ENCODE measurements at regions of chr3 and their contacts with region 1.

Region 1: DNA sequence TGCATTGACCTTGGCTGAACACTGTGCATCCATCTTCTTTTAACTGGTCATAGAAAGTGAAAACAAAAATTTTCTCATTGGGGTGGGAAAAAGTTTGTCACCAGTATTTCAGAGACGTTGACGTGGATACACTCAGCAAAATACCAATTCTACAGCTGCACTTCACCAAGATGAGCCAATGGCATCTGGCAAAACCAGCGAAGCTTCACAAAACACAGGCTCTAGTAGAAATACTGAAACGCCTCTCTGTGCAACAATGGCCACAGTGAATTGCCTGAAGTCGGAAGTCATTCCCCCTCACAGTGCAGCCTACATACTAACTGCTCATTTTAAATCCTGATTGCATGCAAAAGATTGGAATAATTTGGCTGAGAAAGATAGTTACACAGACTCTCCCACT is 17.0 kb downstream of the PCYT1A start:
- DNase-seq: no peak
- ATAC-seq: peak; percentile 20; the same call in 1 of the 2 replicates
- H3K4me3 ChIP-seq: no peak overlapping the region
- H3K27ac ChIP-seq: peak overlapping the region; percentile 55
- H3K4me1 ChIP-seq: peaks cover 26% of the 10 kb centered on the region
- H3K27me3 ChIP-seq: no peaks in the 10 kb centered on the region
- CTCF ChIP-seq: no peak

Region 2: GRCh38 chr3:196241704-196242103 is 28.8 kb before region 1 on chr3:
- CTCF ChIA-PET with region 1: interaction called, 17 read pairs
- POLR2A ChIA-PET with region 1: no interaction called
- intact Hi-C with region 1: no loop called
- DNase-seq: no peak
- ATAC-seq: no peak
- H3K4me3 ChIP-seq: no peak overlapping the region
- H3K27ac ChIP-seq: no peak overlapping the region
- H3K4me1 ChIP-seq: peaks cover 6% of the 10 kb centered on the region; the same call in 1 of the 2 replicates
- H3K27me3 ChIP-seq: no peaks in the 10 kb centered on the region
- CTCF ChIP-seq: no peak

Region 3: GRCh38 chr3:196287440-196288148 is 17.1 kb after region 1 on chr3 and contains the start of gene PCYT1A:
- CTCF ChIA-PET with region 1: no interaction called
- POLR2A ChIA-PET with region 1: interaction called, 5 read pairs
- intact Hi-C with region 1: loop called (anchors 1 kb)
- DNase-seq: peak; percentile 96
- ATAC-seq: peak; percentile 92
- H3K4me3 ChIP-seq: peak within 1 kb of the TSS; percentile 90
- H3K27ac ChIP-seq: peak within 1 kb of the TSS; percentile 87
- H3K4me1 ChIP-seq: peaks cover 19% of the 10 kb centered on the region
- H3K27me3 ChIP-seq: no peaks in the 10 kb centered on the region
- CTCF ChIP-seq: no peak
- total RNA-seq, gene PCYT1A: 46.9 and 63.8 TPM in 2 replicates

Measured in PC-3 (cell line).